SK-N-SH (cell line): ENCODE measurements at regions of chr19 and their contacts with region 1.

Region 1: DNA sequence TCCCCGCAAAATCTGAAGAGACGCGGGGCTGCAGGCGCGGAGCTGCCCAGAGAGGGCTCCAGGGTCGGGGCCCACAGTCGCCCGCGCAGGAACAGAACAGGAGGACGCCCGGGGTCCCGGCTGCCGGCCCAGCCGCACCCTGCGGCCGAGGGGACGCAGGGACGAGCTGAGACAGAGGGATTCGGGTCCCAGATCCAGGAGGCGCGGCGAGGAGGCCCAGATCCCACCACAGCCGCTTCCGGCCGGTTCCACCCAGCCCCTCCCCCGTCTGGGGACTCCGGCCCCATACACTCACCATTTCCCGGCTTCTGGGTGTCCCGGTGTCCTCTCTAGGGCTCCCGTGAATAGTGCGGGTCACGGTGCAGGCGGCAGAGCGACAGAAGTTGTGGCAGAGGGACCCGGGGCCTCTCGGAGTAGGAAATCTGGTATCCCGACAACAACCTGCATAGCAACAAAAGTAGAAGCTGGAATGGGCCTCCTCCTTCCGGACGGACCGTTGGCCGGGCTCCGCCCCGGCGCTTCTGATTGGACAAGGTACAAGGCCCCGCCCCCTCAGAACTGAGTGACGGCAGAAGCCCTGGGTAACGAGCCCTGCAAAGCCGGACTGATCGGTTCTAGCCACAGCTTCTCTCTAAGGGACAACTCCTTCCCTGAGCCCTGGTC is at the start of gene ZNF20:
- DNase-seq: peak; percentile 95
- H3K4me3 ChIP-seq: peak within 1 kb of the TSS; percentile 66 to 99
- H3K27ac ChIP-seq: peak within 1 kb of the TSS; percentile 83 to 89
- H3K4me1 ChIP-seq: peaks cover 0 to 8% of the 10 kb centered on the region in 2 experiments; a peak in 1 of 4 replicates
- H3K27me3 ChIP-seq: no peaks in the 10 kb centered on the region
- CTCF ChIP-seq: no peak
- EP300 ChIP-seq: no peak
- RAD21 ChIP-seq: no peak
- polyA plus RNA-seq, gene ZNF20: 1.8 and 1.9 TPM in 2 replicates

Region 2: DNA sequence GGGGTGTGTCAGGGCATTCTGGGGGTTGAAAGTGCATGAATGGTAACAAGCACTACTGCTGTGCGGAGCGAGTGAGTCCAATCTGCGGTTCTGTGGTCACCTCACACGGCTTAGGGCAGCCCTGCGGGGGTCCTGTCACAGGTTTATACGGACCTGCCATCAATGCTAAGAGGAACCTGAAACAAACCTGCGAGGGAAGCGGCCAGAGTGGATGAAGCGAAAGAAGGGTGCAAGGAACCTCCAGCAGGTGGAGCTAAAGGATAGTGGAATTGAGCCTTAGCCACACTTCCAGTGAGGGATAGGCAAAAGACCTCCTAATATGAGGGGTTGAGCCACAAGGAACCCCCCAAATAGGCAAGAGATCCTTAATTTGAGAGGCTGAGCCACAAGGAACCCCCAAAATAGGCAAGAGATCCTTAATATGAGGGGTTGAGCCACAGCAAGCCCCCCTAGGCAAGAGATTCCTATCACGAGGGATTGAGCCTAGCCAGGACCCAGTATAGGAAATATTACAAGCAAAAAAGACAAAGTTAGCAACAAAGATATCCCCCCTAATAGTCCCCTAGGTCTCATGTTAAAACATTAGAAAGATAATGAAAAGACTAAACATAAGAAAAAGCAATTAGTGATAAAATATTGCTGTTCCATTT is 258.7 kb before region 1 on chr19:
- CTCF ChIA-PET with region 1: interaction called, 16 read pairs
- POLR2A ChIA-PET with region 1: interaction called, 3 read pairs
- DNase-seq: peak; percentile 70
- H3K4me3 ChIP-seq: no peak overlapping the region
- H3K27ac ChIP-seq: no peak overlapping the region
- H3K4me1 ChIP-seq: no peaks in the 10 kb centered on the region
- H3K27me3 ChIP-seq: no peaks in the 10 kb centered on the region
- CTCF ChIP-seq: peak; percentile 59
- EP300 ChIP-seq: no peak
- RAD21 ChIP-seq: peak; percentile 83

Region 3: DNA sequence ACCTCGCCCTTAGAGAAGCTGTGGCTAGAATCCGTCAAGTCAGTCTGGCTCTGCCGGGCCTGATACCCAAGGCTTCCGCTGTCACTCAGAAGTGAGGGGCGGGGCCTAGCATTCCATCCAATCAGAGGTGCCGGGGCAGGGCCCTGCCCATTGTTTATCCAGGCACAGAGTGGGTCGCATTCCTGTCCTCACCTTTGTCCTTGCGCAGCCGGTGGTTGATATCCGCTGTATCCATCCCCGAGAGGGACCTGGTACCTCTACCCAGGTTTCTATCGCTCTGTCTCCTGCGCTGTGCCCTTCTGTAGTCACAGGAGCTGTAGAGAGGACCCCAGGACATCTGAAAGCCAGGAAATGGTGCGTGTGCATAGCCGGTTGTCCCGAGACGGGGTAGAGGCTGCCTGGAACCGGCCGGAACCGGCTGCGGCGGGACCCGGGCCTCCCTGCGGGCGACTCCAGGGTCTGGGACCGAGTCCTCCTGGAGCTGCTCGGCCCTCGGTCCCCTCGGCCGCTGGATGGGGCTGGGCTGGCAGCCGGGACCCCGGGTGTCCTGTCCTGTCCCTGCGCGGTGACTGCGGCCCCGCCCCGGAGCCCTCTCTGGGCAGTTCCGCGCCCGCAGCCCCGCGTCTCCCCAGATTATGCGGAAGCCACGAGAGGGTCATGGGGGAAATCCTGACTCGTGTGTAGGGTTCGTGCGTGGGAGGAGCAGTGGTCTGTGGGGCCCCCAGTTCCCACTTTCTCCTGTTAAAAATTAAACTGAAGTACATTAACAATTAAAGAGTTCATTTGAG is 175.0 kb before region 1 on chr19 and contains the start of gene ZNF763:
- CTCF ChIA-PET with region 1: interaction called, 21 read pairs
- POLR2A ChIA-PET with region 1: interaction called, 3 read pairs
- DNase-seq: peak; percentile 92
- H3K4me3 ChIP-seq: peak within 1 kb of the TSS; percentile 65
- H3K27ac ChIP-seq: peak within 1 kb of the TSS; percentile 30 to 72
- H3K4me1 ChIP-seq: peaks cover 0 to 7% of the 10 kb centered on the region in 2 experiments; a peak in 1 of 4 replicates
- H3K27me3 ChIP-seq: no peaks in the 10 kb centered on the region
- CTCF ChIP-seq: no peak
- EP300 ChIP-seq: no peak
- RAD21 ChIP-seq: no peak
- polyA plus RNA-seq, gene ZNF763: 0.55 and 0.72 TPM in 2 replicates

Region 4: DNA sequence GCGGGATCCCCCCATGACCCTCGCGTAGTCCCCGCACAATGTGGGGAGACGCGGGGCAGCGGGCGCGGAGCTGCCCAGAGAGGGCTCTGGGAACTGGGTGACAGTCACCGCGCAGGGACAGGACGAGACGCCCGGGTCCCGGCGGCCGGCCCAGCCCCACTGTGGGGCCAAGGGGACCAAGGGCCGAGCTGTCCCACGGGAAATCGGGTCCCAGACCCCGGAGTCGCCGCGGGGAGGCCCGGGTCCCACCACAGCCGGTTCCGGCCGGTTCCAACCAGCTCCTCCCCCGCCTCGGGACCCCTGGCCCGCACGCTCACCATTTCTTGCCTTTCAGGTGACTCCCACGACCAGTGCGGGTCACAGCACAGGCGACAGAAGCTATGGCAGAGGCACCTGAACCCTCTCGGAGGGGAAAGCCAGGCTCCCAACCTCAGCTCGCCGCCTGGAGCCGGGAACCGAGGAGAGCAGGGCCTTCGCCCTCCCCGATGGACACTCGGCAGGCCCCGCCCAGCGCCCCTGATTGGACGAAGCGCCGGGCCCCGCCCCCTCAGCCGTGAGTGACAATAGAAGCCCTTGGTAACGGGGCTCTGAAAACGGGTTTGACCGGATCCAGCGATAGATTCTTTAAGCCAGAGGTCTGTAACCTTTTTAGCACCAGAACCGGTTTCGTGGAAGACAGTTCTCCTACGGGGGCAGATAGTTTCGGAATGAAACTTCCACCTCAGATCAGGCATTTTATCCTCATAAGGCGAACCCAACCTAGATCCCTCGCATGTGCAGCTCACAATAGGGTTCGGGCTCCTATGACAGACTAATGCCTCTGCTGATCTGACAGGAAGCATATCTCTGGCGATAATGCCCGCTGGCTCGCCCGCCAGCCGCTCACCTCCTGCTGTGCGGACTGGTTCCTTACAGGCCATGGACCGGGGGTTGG is 104.5 kb before region 1 on chr19 and contains the start of gene ZNF433:
- CTCF ChIA-PET with region 1: interaction called, 17 read pairs
- POLR2A ChIA-PET with region 1: interaction called, 8 read pairs
- DNase-seq: peak; percentile 97
- H3K4me3 ChIP-seq: peak within 1 kb of the TSS; percentile 62 to 86
- H3K27ac ChIP-seq: peak within 1 kb of the TSS; percentile 44 to 56; a peak in 3 of 4 replicates
- H3K4me1 ChIP-seq: peaks cover 0 to 3% of the 10 kb centered on the region in 2 experiments; a peak in 1 of 4 replicates
- H3K27me3 ChIP-seq: no peaks in the 10 kb centered on the region
- CTCF ChIP-seq: no peak
- EP300 ChIP-seq: no peak
- RAD21 ChIP-seq: 0 out of 2 replicates have a peak, but pooled peaks have one; percentile 7
- polyA plus RNA-seq, gene ZNF433: 1.9 and 2.1 TPM in 2 replicates

Region 5: DNA sequence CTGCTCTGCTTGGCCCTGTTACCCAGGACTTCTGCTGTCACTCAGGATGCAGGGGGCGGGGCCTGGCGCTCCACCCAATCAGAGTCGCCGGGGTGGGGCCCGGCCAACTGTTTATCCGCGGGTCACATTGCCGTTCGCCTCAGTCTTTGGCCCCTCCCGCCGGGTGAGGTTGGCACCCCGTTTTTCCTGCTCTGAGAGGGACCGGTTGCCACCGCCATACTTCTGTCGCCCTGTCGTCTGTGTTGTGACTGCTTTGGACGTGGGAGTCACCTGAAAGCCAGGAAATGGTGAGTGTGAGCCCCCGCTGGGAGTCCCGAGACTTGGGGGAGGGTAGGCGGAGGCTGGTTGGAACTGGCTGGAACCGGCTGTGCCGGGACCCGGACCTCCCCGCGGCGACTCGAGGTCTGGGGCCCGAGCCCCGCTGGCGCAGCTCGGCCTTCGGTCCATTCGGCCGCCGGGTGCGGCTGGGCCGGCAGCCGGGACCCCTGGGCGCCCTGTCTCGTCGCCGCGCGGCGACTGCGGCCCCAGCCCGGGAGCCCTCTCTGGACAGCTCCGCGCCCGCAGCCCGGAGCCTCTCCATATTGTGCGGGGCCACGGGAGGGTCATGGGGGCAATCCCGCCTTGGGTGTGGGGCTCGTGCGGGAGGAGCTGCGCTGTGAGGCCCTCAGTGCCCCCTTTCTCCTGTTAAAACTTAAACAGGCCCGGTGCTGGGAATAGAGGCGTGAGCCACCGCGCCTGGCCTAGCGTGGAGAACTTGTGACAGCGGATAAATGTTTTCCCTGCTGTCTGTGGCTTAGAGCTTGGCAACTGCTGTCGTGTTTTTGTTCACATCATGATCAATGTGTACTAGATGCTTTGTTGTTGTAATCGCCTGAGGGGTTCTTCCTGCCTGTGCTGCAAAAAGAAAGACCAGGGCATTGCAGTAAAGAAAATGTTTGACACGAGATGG is 75.2 kb before region 1 on chr19 and contains the start of gene ZNF844:
- CTCF ChIA-PET with region 1: interaction called, 78 read pairs
- POLR2A ChIA-PET with region 1: interaction called, 12 read pairs
- DNase-seq: peak; percentile 97
- H3K4me3 ChIP-seq: peak within 1 kb of the TSS; percentile 55 to 69
- H3K27ac ChIP-seq: peak within 1 kb of the TSS in 1 of 2 experiments; percentile 67; a peak in 1 of 4 replicates
- H3K4me1 ChIP-seq: no peaks in the 10 kb centered on the region; a peak in 1 of 4 replicates
- H3K27me3 ChIP-seq: no peaks in the 10 kb centered on the region
- CTCF ChIP-seq: no peak
- EP300 ChIP-seq: no peak
- RAD21 ChIP-seq: no peak
- polyA plus RNA-seq, gene ZNF844: 0.28 and 0.31 TPM in 2 replicates

Region 6: GRCh38 chr19:12126707-12127106 is 13.3 kb before region 1 on chr19:
- CTCF ChIA-PET with region 1: interaction called, 21 read pairs
- POLR2A ChIA-PET with region 1: no interaction called
- DNase-seq: peak; percentile 45
- H3K4me3 ChIP-seq: peak overlapping the region in 1 of 2 experiments; percentile 40; a peak in 1 of 4 replicates
- H3K27ac ChIP-seq: no peak overlapping the region
- H3K4me1 ChIP-seq: no peaks in the 10 kb centered on the region
- H3K27me3 ChIP-seq: no peaks in the 10 kb centered on the region
- CTCF ChIP-seq: peak; percentile 56
- EP300 ChIP-seq: no peak
- RAD21 ChIP-seq: peak; percentile 37

Region 7: GRCh38 chr19:12162882-12163806 is 23.1 kb after region 1 on chr19 and contains the start of gene ZNF136:
- CTCF ChIA-PET with region 1: interaction called, 11 read pairs
- POLR2A ChIA-PET with region 1: no interaction called
- DNase-seq: peak; percentile 98
- H3K4me3 ChIP-seq: peak within 1 kb of the TSS; percentile 91 to 98
- H3K27ac ChIP-seq: peak within 1 kb of the TSS; percentile 90 to 92
- H3K4me1 ChIP-seq: peaks cover 7 to 11% of the 10 kb centered on the region in 2 experiments; a peak in 2 of 4 replicates
- H3K27me3 ChIP-seq: no peaks in the 10 kb centered on the region
- CTCF ChIP-seq: no peak
- EP300 ChIP-seq: no peak
- RAD21 ChIP-seq: no peak
- polyA plus RNA-seq, gene ZNF136: 1.7 and 2.2 TPM in 2 replicates

Region 8: DNA sequence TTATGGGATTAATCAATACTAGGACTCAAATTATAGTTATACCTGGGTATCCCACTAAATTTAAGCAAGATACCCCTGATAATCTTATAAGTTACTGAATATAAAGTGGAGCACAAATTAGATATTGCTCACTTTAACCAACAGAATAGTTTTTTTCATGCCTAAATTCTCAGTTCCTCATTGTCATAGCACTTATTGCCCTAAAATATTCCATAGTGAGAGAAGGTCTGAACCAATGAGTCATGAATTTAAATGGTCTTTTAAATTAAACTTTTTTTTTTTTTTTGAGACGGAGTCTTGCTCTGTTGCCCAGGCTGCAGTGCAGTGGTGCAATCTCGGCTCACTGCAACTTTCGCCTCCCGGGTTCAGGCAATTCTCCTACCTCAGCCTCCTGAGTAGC is 65.3 kb after region 1 on chr19:
- CTCF ChIA-PET with region 1: no interaction called
- POLR2A ChIA-PET with region 1: no interaction called
- DNase-seq: no peak
- H3K4me3 ChIP-seq: no peak overlapping the region
- H3K27ac ChIP-seq: no peak overlapping the region
- H3K4me1 ChIP-seq: no peaks in the 10 kb centered on the region
- H3K27me3 ChIP-seq: no peaks in the 10 kb centered on the region
- CTCF ChIP-seq: no peak
- EP300 ChIP-seq: no peak
- RAD21 ChIP-seq: no peak